HepG2 (cell line): ENCODE measurements at regions of chr16 and their contacts with region 1.

Region 1: GRCh38 chr16:84995663-84996062 is 15.7 kb downstream of the ZDHHC7 start:
- DNase-seq: no peak
- ATAC-seq: no peak
- H3K4me3 ChIP-seq: no peak overlapping the region
- H3K27ac ChIP-seq: peak overlapping the region; percentile 77
- H3K4me1 ChIP-seq: peaks cover 75% of the 10 kb centered on the region
- H3K27me3 ChIP-seq: no peaks in the 10 kb centered on the region
- CTCF ChIP-seq: no peak
- EP300 ChIP-seq: no peak
- POLR2A ChIP-seq: no peak
- RAD21 ChIP-seq: no peak

Region 2: DNA sequence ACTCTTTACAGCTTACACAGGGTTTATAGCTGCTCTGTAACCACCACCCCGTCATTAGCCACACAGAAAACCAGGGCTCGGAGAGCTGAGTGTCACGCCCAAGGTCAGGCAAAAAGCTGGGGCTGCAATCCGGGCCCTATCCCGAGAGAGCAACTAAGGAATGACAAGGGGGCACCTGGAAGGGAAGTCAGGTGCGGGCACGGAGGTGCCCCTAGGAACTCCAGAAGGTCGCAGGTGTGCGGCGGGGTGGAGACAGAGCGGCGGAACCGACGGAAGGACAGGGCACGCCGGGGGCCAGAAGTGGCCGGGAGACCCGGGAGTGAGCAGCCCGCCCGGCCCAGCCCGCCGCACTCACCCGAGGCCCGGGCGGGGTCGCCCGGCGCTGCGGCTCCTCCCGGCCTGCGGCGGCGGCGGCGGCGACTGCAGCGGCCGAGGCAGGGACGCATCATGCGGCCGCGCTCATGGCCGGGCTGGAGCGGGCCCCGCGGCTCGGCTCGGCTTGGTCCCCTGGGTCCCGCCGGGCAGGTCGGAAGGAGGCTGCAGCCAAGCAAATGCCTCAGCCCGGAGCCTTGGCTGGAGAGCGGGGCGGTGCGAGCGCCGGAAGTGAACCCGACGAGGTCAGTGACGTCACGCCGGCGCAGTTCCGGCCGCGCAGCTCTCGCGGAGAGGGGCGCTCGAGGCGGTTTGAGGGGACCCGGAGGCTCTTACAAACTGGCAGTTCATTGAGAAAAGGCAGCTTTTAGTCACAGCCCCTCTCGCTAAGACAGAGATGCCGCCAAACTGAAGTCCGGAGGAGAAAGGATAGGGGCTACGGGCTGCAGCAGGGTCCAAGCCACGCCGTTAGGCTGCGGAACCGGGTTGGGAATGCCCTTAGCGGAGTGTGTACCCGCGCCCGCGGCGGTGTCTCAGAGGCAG is 15.5 kb after region 1 on chr16 and contains the start of gene ZDHHC7:
- CTCF ChIA-PET with region 1: no interaction called
- POLR2A ChIA-PET with region 1: interaction called, 64 read pairs
- in situ Hi-C with region 1: no loop called
- intact Hi-C with region 1: no loop called
- DNase-seq: peak; percentile 76
- ATAC-seq: peak; percentile 89
- H3K4me3 ChIP-seq: peak within 1 kb of the TSS; percentile 79 to 97 (median 92)
- H3K27ac ChIP-seq: peak within 1 kb of the TSS; percentile 93
- H3K4me1 ChIP-seq: peaks cover 73% of the 10 kb centered on the region
- H3K27me3 ChIP-seq: no peaks in the 10 kb centered on the region; a peak in 2 of 5 replicates
- CTCF ChIP-seq: peak; percentile 49
- EP300 ChIP-seq: no peak; a peak in 1 of 4 replicates
- POLR2A ChIP-seq: peak; percentile 91 to 93; a peak in 3 of 4 replicates
- RAD21 ChIP-seq: peak; percentile 66
- total RNA-seq, gene ZDHHC7: 39.6 and 46.8 TPM in 2 replicates

Region 3: GRCh38 chr16:85799497-85800337 is 804.1 kb after region 1 on chr16 and contains the starts of genes COX4I1 and EMC8:
- CTCF ChIA-PET with region 1: no interaction called
- POLR2A ChIA-PET with region 1: no interaction called
- in situ Hi-C with region 1: no loop called
- intact Hi-C with region 1: no loop called
- DNase-seq: peak; percentile 90
- ATAC-seq: peak; percentile 88
- H3K4me3 ChIP-seq: peak within 1 kb of the TSS; percentile 85 to 100 (median 89)
- H3K27ac ChIP-seq: peak within 1 kb of the TSS; percentile 92
- H3K4me1 ChIP-seq: peaks cover 45% of the 10 kb centered on the region
- H3K27me3 ChIP-seq: no peaks in the 10 kb centered on the region; a peak in 1 of 5 replicates
- CTCF ChIP-seq: peak; percentile 30
- EP300 ChIP-seq: peak in 1 of 2 experiments; percentile 43; a peak in 2 of 4 replicates
- POLR2A ChIP-seq: peak; percentile 65 to 88; a peak in 3 of 4 replicates
- RAD21 ChIP-seq: no peak
- total RNA-seq, gene COX4I1: 631 and 658 TPM in 2 replicates
- total RNA-seq, gene EMC8: 47.6 and 55.0 TPM in 2 replicates